ENCODE measurements at regions of chr22 and their contacts with region 1.

Region 1: GRCh38 chr22:19304547-19304946 is 13.0 kb upstream of the CLTCL1 start:
- DNase-seq: no peak
- H3K4me3 ChIP-seq: no peak overlapping the region
- H3K27ac ChIP-seq: no peak overlapping the region
- H3K4me1 ChIP-seq: no peaks in the 10 kb centered on the region
- H3K27me3 ChIP-seq: no peaks in the 10 kb centered on the region
- CTCF ChIP-seq: no peak
- POLR2A ChIP-seq: no peak

Region 2: DNA sequence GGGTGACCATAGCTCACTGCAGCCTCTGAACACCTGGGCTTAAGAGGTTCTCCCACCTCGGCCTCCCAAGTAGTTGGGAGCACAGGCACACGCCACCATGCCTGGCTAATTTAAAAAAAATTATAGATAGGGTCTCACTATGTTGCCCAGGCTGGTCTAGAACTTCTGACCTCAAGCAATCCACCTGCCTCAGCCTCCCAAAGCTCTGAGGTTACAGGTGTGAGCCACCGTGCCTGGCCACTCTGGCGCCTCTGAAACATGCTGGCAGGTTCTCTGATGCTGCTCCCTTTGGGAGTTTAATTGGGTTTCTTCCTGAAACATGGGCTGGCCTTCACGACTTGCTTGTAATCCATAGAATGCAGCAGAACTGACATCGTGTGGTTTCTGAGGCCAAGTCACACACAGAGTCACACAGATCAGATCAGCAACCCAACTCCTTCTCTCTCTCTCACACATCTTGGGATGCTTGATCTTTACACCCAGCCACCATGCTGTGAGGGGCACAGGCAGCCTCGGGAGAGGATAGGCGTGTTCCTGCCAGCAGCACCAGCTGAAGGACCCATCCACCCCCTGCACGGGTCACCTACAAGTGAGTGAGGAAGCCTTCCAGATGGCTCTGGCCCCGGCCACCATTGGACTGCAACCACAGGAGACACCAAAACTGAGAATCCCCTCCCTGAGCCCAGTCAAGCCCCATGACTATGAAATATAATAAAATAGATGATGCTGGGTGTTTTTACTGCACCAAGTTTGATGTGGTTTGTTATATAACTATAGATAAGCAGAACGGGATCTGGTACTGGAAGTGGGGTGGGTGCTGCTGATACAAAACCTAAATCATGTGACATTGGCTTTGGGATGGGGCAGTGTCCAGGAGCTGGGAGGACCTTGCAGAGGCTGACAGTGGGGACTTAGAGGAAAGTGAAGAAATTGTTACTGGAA is 151.3 kb before region 1 on chr22:
- intact Hi-C with region 1: no loop called
- DNase-seq: no peak
- H3K4me3 ChIP-seq: no peak overlapping the region
- H3K27ac ChIP-seq: no peak overlapping the region
- H3K4me1 ChIP-seq: peaks cover 0 to 5% of the 10 kb centered on the region in 2 donors
- H3K27me3 ChIP-seq: peaks cover 37% of the 10 kb centered on the region
- CTCF ChIP-seq: no peak
- POLR2A ChIP-seq: no peak

Region 3: DNA sequence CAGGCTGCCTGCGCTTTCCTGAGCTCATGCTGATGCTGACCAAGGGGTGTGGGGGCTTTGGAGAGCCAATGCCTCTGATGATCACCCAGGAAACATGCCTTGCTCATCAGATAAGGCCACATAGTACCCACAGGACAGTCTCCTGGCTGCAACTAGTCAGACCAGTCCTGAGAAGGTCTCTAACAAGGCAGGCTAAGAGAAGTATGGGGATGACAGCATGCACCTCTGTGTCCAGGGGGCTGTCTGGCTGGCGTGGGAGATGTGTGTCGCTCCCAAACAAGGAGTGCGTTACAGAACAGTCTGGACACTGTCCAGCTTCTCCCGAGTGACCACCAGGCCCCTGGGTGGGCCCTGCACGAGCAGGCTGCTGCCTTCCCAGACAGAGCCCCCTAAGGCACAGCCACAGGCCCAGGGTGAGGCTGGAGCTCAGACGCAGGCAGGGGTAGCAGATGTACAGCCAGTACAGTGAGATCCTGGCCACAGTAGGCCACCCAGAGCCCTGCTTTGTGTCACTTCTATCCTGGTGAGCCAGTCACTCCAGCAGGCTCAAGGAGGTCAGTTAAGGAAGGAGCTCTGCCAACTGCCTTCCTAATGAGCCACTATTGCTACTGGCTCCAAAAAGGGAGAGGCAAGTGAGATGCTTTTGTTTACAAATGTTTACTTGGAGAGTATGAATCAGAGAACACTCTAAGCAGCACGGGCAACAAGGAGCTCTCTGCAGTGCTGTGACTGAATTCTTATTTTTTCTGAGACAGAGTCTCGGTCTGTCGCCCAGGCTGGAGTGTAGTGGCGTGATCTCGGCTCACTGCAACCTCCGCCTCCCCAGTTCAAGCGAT is 52.9 kb after region 1 on chr22:
- intact Hi-C with region 1: loop called in 1 of 2 experiments (anchors 10 kb)
- DNase-seq: no peak
- H3K4me3 ChIP-seq: no peak overlapping the region
- H3K27ac ChIP-seq: no peak overlapping the region
- H3K4me1 ChIP-seq: no peaks in the 10 kb centered on the region
- H3K27me3 ChIP-seq: no peaks in the 10 kb centered on the region
- CTCF ChIP-seq: no peak
- POLR2A ChIP-seq: no peak

Measured in adrenal gland (tissue), 19 donors.